Activated CD8-positive, alpha-beta T cell treated with anti-CD3 and anti-CD28 coated beads, Interleukin-2, amount 10 ng/mL, durations not matched to agents 7 days and 5 days (primary cell): ENCODE measurements at regions of chr15 and their contacts with region 1.

Region 1: GRCh38 chr15:88620995-88621772 is at the start of gene AEN:
- DNase-seq: peak; percentile 96
- ATAC-seq: peak; percentile 91
- H3K4me3 Mint-ChIP-seq: peak within 1 kb of the TSS; percentile 94
- H3K27ac Mint-ChIP-seq: peak within 1 kb of the TSS; percentile 91
- H3K4me1 Mint-ChIP-seq: peaks cover 46% of the 10 kb centered on the region
- H3K27me3 Mint-ChIP-seq: peaks cover 4% of the 10 kb centered on the region
- total RNA-seq, gene AEN: 52.6 to 53.2 TPM

Region 2: DNA sequence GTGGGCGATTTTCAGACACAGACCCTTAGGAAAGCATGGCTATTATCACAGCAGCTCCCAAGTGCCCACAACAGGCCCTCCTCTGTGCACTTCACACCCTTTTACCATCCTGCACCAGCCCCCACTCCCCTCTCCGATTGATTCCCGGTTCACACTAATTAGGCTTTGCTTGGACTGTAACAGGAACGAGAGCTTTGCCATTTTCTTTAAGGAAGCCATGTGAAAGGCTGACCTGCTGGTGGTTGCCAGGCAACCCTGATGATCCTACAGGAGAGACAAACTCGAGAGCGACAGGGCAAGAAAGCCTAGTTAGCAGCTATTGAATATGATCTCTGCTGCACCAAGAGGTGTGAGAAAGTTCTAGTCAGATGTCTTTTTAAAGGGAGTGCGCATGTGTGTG is 46.5 kb before region 1 on chr15:
- CTCF ChIA-PET with region 1: no interaction called
- POLR2A ChIA-PET with region 1: no interaction called
- DNase-seq: no peak
- ATAC-seq: no peak
- H3K4me3 Mint-ChIP-seq: no peak overlapping the region
- H3K27ac Mint-ChIP-seq: no peak overlapping the region
- H3K4me1 Mint-ChIP-seq: no peaks in the 10 kb centered on the region
- H3K27me3 Mint-ChIP-seq: peaks cover 6% of the 10 kb centered on the region

Region 3: DNA sequence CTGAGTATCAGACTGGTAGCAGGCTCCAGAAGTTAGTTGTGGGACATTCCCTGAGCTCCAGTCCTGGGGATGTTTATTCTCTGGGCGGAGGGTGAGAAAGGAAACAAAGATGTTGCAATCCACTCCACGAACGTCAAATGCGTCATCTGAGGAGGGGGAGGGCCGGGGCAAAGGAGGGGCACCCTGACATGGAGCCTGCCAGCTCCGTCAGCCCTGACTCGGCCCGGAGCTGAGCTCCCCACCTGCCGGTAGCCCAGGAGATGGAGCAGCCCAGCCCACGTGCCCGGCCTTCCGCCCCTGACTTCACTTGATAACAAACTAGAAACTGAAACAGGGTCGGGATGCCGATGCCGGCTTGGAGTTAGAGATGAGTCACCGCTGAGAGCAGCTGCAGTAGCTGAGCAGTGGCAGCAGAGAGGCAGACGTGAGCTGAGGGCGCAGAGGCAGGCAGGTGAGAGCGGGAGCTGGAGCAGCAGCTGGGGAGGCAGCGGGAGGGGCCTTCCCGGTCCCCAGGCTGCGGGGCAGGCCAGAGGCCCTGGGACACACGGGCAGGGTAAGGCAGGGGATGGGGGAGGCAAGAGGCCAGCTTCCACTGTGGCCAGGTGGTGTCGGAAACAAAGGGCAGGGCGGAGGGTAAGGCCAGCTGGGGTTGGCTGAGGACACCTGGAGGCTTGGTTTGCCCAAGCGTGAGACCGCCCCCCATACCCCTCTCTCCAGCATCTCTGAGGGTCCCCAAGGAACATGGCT is 17.6 kb after region 1 on chr15 and contains the start of gene ISG20:
- CTCF ChIA-PET with region 1: interaction called, 10 read pairs
- POLR2A ChIA-PET with region 1: interaction called, 14 read pairs
- DNase-seq: peak; percentile 98
- ATAC-seq: peak; percentile 88
- H3K4me3 Mint-ChIP-seq: peak within 1 kb of the TSS; percentile 84
- H3K27ac Mint-ChIP-seq: peak within 1 kb of the TSS; percentile 95
- H3K4me1 Mint-ChIP-seq: peaks cover 78% of the 10 kb centered on the region
- H3K27me3 Mint-ChIP-seq: no peaks in the 10 kb centered on the region
- total RNA-seq, gene ISG20: 141 to 151 TPM

Region 4: DNA sequence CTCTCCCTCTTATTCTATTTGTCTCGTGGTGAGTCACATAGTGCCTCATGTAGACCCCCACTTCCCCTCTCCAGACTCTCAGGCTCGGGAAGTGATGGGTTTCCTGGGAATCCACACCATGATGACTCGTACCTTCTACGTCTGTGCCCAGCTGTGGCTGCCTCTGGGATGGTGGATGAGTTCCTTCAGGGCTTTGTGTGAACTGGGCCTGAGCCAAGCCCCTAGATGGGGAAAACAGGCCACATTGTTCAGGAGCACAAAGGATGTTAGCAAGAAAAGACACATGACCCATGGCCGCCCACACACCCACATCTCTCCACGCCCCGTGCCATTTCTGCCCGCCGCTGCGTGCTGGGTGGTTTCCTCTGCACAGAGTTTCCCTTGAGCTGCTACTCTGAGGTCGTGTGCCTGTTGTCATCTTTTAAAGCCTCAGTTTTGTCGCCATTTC is 28.1 kb after region 1 on chr15:
- CTCF ChIA-PET with region 1: interaction called, 27 read pairs
- POLR2A ChIA-PET with region 1: interaction called, 10 read pairs
- DNase-seq: peak; percentile 81
- ATAC-seq: peak; percentile 82
- H3K4me3 Mint-ChIP-seq: peak overlapping the region; percentile 59
- H3K27ac Mint-ChIP-seq: peak overlapping the region; percentile 97
- H3K4me1 Mint-ChIP-seq: peaks cover 77% of the 10 kb centered on the region
- H3K27me3 Mint-ChIP-seq: no peaks in the 10 kb centered on the region

Region 5: GRCh38 chr15:88658972-88659931 is 38.1 kb after region 1 on chr15:
- CTCF ChIA-PET with region 1: interaction called, 35 read pairs
- POLR2A ChIA-PET with region 1: interaction called, 10 read pairs
- DNase-seq: no peak
- ATAC-seq: no peak
- H3K4me3 Mint-ChIP-seq: no peak overlapping the region
- H3K27ac Mint-ChIP-seq: no peak overlapping the region
- H3K4me1 Mint-ChIP-seq: peaks cover 15% of the 10 kb centered on the region
- H3K27me3 Mint-ChIP-seq: no peaks in the 10 kb centered on the region

Region 6: DNA sequence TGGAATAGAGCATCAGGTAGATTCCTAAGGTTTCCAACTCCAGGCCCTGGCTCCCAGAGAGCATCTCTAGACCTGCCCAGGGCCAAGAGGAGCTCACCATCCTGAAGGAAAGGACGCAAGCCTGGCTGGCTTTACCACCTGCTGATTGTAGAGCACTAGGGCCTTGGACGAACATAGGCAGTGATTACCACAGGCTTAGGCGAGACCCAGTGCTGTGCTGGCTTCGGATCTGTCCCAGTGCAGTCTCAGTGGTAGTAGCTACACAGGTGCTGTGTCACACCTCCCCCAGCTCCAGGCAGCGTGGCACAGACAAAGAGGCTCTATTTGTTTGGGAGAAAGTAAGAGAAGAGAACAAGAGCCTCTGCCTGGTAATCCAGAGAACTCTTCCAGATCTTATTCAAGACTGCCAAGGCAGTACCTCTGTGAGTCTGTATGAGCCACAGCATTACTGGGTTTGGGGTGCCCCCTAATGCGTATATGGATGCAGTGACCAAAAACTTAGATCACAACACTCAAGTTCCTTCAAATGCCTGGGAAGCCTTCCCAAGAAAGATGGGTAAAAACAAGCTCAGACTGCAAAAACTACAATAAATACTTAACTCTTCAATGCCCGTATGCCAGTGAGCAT is 43.1 kb after region 1 on chr15:
- CTCF ChIA-PET with region 1: interaction called, 35 read pairs
- POLR2A ChIA-PET with region 1: interaction called, 10 read pairs
- DNase-seq: peak; percentile 66
- ATAC-seq: peak; percentile 78
- H3K4me3 Mint-ChIP-seq: no peak overlapping the region
- H3K27ac Mint-ChIP-seq: no peak overlapping the region
- H3K4me1 Mint-ChIP-seq: no peaks in the 10 kb centered on the region
- H3K27me3 Mint-ChIP-seq: peaks cover 8% of the 10 kb centered on the region

Region 7: GRCh38 chr15:88834211-88834812 is 213.1 kb after region 1 on chr15:
- CTCF ChIA-PET with region 1: interaction called, 18 read pairs
- POLR2A ChIA-PET with region 1: interaction called, 4 read pairs
- DNase-seq: peak; percentile 26
- ATAC-seq: no peak
- H3K4me3 Mint-ChIP-seq: no peak overlapping the region
- H3K27ac Mint-ChIP-seq: no peak overlapping the region
- H3K4me1 Mint-ChIP-seq: peaks cover 4% of the 10 kb centered on the region
- H3K27me3 Mint-ChIP-seq: no peaks in the 10 kb centered on the region

Region 8: DNA sequence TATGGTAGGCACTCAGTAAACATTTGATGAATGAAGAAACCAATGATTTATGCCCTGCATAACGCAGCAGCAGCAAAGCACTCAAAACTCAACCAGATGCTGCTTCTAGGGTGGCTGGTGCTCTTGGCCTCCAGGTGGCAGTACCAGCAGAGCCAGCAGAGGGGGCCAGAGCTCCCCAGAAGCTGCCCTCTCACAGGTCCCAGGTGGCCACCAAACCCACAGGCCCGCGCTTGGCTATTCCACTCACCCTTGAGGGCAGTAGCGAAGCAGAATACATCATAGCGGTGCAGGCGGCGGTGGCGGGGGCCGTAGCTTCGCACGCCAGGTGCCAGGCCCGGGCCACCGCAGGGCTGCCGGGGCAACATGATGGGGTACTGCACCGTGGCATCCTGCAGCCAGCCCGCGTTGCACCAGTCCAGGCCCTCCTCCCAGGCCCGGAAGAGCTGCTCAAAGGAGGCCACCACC is 257.6 kb after region 1 on chr15:
- CTCF ChIA-PET with region 1: interaction called, 13 read pairs
- POLR2A ChIA-PET with region 1: no interaction called
- DNase-seq: peak; percentile 58
- ATAC-seq: peak; percentile 79
- H3K4me3 Mint-ChIP-seq: no peak overlapping the region
- H3K27ac Mint-ChIP-seq: no peak overlapping the region
- H3K4me1 Mint-ChIP-seq: no peaks in the 10 kb centered on the region
- H3K27me3 Mint-ChIP-seq: no peaks in the 10 kb centered on the region